GM23248 (cell line): ENCODE measurements at regions of chr2 and their contacts with region 1.

Region 1: GRCh38 chr2:137838255-137839092 is 125.8 kb upstream of the HNMT start:
- DNase-seq: peak; percentile 73
- H3K4me3 ChIP-seq: no peak overlapping the region
- H3K27ac ChIP-seq: no peak overlapping the region
- H3K4me1 ChIP-seq: no peaks in the 10 kb centered on the region
- H3K27me3 ChIP-seq: no peaks in the 10 kb centered on the region

Region 2: DNA sequence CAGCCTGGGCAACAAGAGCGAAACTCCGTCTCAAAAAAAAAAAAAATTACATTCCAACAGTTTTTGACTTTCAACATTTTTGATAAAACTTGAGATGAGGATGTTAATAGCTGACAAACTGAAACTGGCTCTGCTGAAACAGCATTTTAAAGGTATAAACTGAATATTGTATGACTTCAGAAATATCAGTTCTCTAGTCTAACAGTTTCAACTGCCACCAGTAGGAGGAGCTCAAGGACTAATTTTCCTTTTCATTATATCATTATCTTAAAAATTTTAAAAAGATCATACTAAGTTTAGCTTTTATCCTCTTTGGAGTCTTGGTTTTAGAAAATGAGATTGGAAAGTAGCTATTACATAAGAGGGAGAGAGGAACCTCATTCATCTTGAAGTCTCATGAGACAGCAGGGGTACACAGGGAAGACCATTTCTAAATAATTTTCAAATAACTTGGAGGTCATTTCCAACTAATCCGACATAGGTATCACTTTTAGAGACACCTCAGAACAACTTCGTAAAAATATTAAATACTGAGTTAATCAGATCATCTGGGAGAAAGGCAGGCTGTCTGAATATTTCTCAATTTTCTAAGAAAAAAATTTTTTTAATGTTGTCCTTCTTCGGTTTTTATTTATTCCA is 1924.6 kb before region 1 on chr2:
- in situ Hi-C with region 1: loop called (anchors 25 kb)
- DNase-seq: peak; percentile 51
- H3K4me3 ChIP-seq: no peak overlapping the region
- H3K27ac ChIP-seq: no peak overlapping the region
- H3K4me1 ChIP-seq: peaks cover 17% of the 10 kb centered on the region
- H3K27me3 ChIP-seq: no peaks in the 10 kb centered on the region

Region 3: DNA sequence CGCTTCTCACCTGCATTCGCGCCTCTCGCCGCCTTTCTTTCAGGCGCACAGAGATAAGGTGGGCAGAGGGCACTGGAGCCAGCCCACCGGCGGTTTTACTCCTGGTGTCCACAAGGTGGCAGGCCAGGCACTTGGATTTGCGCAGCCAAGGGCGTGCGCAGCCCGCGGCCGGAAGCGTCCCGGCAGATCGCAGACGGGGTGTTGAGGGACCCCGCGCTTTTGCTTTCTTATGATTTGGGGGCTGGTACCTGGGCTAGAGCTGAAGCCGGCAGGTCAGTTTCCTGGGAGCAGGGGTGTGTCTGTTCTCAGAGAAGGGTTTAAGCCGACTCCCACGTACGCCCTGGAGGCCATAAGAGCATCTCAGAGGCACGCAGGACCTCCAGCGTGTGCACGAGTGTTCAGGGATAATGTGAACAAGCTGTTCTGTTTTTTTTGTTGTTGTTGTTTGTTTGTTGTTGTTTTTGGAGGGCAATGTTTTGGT is 1414.9 kb before region 1 on chr2:
- in situ Hi-C with region 1: loop called (anchors 10 kb)
- DNase-seq: peak; percentile 84
- H3K4me3 ChIP-seq: peak overlapping the region; percentile 71
- H3K27ac ChIP-seq: no peak overlapping the region
- H3K4me1 ChIP-seq: no peaks in the 10 kb centered on the region
- H3K27me3 ChIP-seq: peaks cover 8% of the 10 kb centered on the region

Region 4: GRCh38 chr2:136920652-136921333 is 917.7 kb before region 1 on chr2:
- in situ Hi-C with region 1: loop called (anchors 25 kb)
- DNase-seq: no peak
- H3K4me3 ChIP-seq: no peak overlapping the region
- H3K27ac ChIP-seq: no peak overlapping the region
- H3K4me1 ChIP-seq: no peaks in the 10 kb centered on the region
- H3K27me3 ChIP-seq: no peaks in the 10 kb centered on the region

Region 5: GRCh38 chr2:137570484-137570883 is 268.0 kb before region 1 on chr2:
- in situ Hi-C with region 1: no loop called
- DNase-seq: no peak
- H3K4me3 ChIP-seq: no peak overlapping the region
- H3K27ac ChIP-seq: no peak overlapping the region
- H3K4me1 ChIP-seq: no peaks in the 10 kb centered on the region
- H3K27me3 ChIP-seq: no peaks in the 10 kb centered on the region